Activated CD4-positive, alpha-beta memory T cell treated with anti-CD3 and anti-CD28 coated beads, Interleukin-2, amount 10 ng/mL, durations not matched to agents 7 days and 5 days (primary cell): ENCODE measurements at regions of chr9 and their contacts with region 1.

Region 1: DNA sequence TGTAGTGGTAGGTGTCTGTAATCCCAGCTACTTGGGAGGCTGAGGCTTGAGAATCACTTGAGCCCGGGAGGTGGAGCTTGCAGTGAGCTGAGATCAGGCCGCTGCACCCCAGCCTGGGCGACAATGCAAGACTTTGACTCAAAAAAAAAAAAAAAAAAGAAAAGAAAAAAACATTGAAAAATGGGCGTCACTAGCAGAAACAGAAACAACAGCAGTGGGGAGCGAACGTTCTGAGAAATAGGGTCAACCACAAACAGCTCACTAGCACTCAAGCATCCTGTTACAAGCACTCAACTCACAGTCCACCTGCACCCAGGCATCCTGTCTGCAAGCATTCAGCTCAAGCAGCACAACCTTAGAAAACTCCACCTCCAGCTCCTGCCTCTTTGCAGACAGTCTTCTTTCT is 17.2 kb downstream of the TRIM14 start:
- DNase-seq: peak; percentile 90
- H3K4me3 Mint-ChIP-seq: peak overlapping the region; percentile 70
- H3K27ac Mint-ChIP-seq: peak overlapping the region; percentile 97
- H3K4me1 Mint-ChIP-seq: peaks cover 87% of the 10 kb centered on the region
- H3K27me3 Mint-ChIP-seq: no peaks in the 10 kb centered on the region

Region 2: DNA sequence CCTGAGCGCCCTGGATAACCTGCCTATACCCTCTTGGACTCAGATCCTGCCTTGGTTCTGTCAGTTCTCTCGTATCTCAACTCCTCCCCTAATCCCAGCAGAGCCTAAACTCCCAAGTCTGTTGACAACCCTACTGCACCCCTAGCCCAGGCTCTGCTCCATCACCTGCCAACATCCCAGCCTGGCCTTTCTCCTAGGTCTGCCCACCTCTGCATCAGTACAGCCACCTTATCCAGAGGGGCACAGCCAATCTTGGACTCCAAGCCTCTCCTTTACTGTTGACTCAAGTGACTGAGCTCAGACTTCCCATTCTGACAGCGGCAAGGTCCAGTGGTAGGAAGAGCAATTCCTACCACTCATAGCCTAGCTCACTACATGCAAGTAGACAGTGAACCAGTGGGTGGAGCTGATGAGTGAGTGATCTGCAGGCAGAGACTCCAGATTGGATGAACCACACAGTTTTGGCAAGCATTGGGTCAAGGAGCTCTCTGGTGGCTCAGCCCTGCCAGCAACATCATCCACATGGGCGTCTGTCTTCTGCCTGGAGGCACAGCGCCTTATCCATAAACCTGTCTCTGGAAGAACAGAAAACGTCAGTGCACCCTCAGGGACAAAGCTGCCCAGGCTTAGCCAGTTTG is 206.1 kb before region 1 on chr9:
- CTCF ChIA-PET with region 1: no interaction called
- POLR2A ChIA-PET with region 1: no interaction called
- DNase-seq: no peak
- H3K4me3 Mint-ChIP-seq: no peak overlapping the region
- H3K27ac Mint-ChIP-seq: no peak overlapping the region
- H3K4me1 Mint-ChIP-seq: peaks cover 2% of the 10 kb centered on the region
- H3K27me3 Mint-ChIP-seq: no peaks in the 10 kb centered on the region

Region 3: GRCh38 chr9:98056269-98057137 is 45.4 kb before region 1 on chr9 and contains the start of gene NANS:
- CTCF ChIA-PET with region 1: interaction called, 5 read pairs
- POLR2A ChIA-PET with region 1: interaction called, 15 read pairs
- DNase-seq: peak; percentile 94
- H3K4me3 Mint-ChIP-seq: peak within 1 kb of the TSS; percentile 97
- H3K27ac Mint-ChIP-seq: peak within 1 kb of the TSS; percentile 92
- H3K4me1 Mint-ChIP-seq: peaks cover 37% of the 10 kb centered on the region
- H3K27me3 Mint-ChIP-seq: no peaks in the 10 kb centered on the region
- total RNA-seq, gene NANS: 46.1 to 47.3 TPM

Region 4: GRCh38 chr9:98081477-98082219 is 20.2 kb before region 1 on chr9:
- CTCF ChIA-PET with region 1: interaction called, 4 read pairs
- POLR2A ChIA-PET with region 1: interaction called, 10 read pairs
- DNase-seq: peak; percentile 53
- H3K4me3 Mint-ChIP-seq: no peak overlapping the region
- H3K27ac Mint-ChIP-seq: peak overlapping the region; percentile 66
- H3K4me1 Mint-ChIP-seq: peaks cover 46% of the 10 kb centered on the region
- H3K27me3 Mint-ChIP-seq: no peaks in the 10 kb centered on the region

Region 5: GRCh38 chr9:98087420-98088354 is 14.2 kb before region 1 on chr9:
- CTCF ChIA-PET with region 1: interaction called, 7 read pairs
- POLR2A ChIA-PET with region 1: interaction called, 18 read pairs
- DNase-seq: no peak
- H3K4me3 Mint-ChIP-seq: no peak overlapping the region
- H3K27ac Mint-ChIP-seq: no peak overlapping the region
- H3K4me1 Mint-ChIP-seq: peaks cover 31% of the 10 kb centered on the region
- H3K27me3 Mint-ChIP-seq: no peaks in the 10 kb centered on the region